Ascending aorta (tissue), 2 donors: ENCODE measurements at regions of chr16 and their contacts with region 1.

Region 1: GRCh38 chr16:13957197-13958078 is 37.5 kb downstream of the ERCC4 start:
- DNase-seq: peak in 1 of 2 donors; percentile 83
- H3K4me3 ChIP-seq: peak overlapping the region; percentile 44 to 50
- H3K27ac ChIP-seq: peak overlapping the region; percentile 59 to 67
- H3K4me1 ChIP-seq: peaks cover 0 to 11% of the 10 kb centered on the region in 2 donors
- H3K27me3 ChIP-seq: no peaks in the 10 kb centered on the region
- CTCF ChIP-seq: no peak

Region 2: GRCh38 chr16:14057878-14058382 is 100.5 kb after region 1 on chr16:
- intact Hi-C with region 1: loop called (anchors 5 kb)
- DNase-seq: peak in 1 of 2 donors; percentile 81
- H3K4me3 ChIP-seq: peak overlapping the region in 1 of 2 donors; percentile 53
- H3K27ac ChIP-seq: peak overlapping the region; percentile 77 to 87
- H3K4me1 ChIP-seq: peaks cover 0 to 4% of the 10 kb centered on the region in 2 donors
- H3K27me3 ChIP-seq: no peaks in the 10 kb centered on the region
- CTCF ChIP-seq: no peak

Region 3: GRCh38 chr16:14186007-14186794 is 228.8 kb after region 1 on chr16:
- intact Hi-C with region 1: loop called (anchors 10 kb)
- DNase-seq: no peak
- H3K4me3 ChIP-seq: peak overlapping the region; percentile 48 to 55
- H3K27ac ChIP-seq: peak overlapping the region; percentile 66 to 67
- H3K4me1 ChIP-seq: peaks cover 0 to 11% of the 10 kb centered on the region in 2 donors
- H3K27me3 ChIP-seq: no peaks in the 10 kb centered on the region
- CTCF ChIP-seq: peak; percentile 28 to 57 (median 39)